ENCODE measurements at regions of chr1 and their contacts with region 1.

Region 1: GRCh38 chr1:54335755-54336108 is 70.5 kb downstream of the SSBP3 start:
- DNase-seq: peak; percentile 80
- H3K4me3 ChIP-seq: peak overlapping the region; percentile 58
- H3K27ac ChIP-seq: peak overlapping the region; percentile 100
- H3K27me3 ChIP-seq: no peaks in the 10 kb centered on the region
- CTCF ChIP-seq: no peak

Region 2: DNA sequence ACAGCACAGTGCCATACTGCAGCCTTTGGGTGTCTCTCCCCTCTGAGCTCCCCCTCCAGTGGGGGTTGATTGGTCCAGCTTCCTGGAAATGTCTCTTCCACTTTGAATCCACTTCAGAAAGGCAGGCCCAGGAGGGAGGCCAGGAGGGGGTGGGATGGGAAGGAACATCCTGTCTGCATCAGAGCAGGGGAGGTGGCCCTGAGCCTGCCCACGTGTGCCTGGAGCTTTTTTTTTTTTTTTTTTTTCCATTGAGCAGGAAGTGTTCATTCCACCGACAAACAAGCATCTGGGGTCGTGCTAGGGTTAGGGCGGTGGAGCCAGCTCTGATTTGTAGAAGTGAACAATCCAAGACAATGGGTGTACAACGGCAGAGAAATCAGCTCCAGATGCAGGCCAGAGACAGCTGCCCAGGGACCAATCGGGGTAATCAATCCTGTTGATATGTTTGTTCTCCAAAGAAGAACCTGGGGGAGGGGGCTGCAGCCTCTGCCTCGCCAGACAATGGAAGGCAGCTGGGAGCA is 22.9 kb before region 1 on chr1:
- CTCF ChIA-PET with region 1: no interaction called
- POLR2A ChIA-PET with region 1: interaction called, 15 read pairs
- DNase-seq: peak; percentile 30
- H3K4me3 ChIP-seq: no peak overlapping the region
- H3K27ac ChIP-seq: peak overlapping the region; percentile 39
- H3K27me3 ChIP-seq: no peaks in the 10 kb centered on the region
- CTCF ChIP-seq: no peak